Calu3 (cell line): ENCODE measurements at regions of chr1 and their contacts with region 1.

Region 1: GRCh38 chr1:201999625-202000238 is 10.7 kb upstream of the ELF3 start:
- DNase-seq: peak; percentile 65
- H3K4me3 Mint-ChIP-seq: no peak overlapping the region
- H3K27ac Mint-ChIP-seq: no peak overlapping the region
- H3K4me1 Mint-ChIP-seq: no peaks in the 10 kb centered on the region
- H3K27me3 Mint-ChIP-seq: no peaks in the 10 kb centered on the region
- CTCF ChIP-seq: peak; percentile 85

Region 2: GRCh38 chr1:201955009-201955728 is 44.6 kb before region 1 on chr1 and contains the start of gene TIMM17A:
- CTCF ChIA-PET with region 1: no interaction called
- intact Hi-C with region 1: no loop called
- DNase-seq: peak; percentile 98
- H3K4me3 Mint-ChIP-seq: peak within 1 kb of the TSS; percentile 99
- H3K27ac Mint-ChIP-seq: peak within 1 kb of the TSS; percentile 92
- H3K4me1 Mint-ChIP-seq: peaks cover 8% of the 10 kb centered on the region
- H3K27me3 Mint-ChIP-seq: no peaks in the 10 kb centered on the region
- CTCF ChIP-seq: no peak
- total RNA-seq, gene TIMM17A: 78.5 and 85.3 TPM in 2 replicates

Region 3: DNA sequence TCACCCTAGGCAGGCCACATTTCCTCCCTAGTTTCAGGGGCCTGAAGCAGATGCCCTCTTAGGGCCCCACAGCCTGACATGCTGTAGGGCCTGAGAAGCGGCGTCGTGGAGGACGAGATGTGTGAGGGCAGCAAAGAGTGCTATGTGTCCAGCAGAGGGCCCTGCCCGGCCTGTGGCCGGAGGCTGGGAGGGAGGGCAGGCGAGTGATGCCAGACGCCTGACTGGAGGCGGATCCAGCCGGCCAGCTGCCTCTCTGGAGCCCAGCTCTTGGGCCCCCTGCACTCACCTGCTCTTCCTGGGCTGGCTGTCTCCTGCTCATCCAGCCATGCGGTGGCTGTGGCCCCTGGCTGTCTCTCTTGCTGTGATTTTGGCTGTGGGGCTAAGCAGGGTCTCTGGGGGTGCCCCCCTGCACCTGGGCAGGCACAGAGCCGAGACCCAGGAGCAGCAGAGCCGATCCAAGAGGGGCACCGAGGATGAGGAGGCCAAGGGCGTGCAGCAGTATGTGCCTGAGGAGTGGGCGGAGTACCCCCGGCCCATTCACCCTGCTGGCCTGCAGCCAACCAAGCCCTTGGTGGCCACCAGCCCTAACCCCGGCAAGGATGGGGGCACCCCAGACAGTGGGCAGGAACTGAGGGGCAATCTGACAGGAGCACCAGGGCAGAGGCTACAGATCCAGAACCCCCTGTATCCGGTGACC is 123.1 kb after region 1 on chr1 and contains the start of gene GPR37L1:
- CTCF ChIA-PET with region 1: interaction called, 29 read pairs
- intact Hi-C with region 1: loop called (anchors 1 kb)
- DNase-seq: peak; percentile 79
- H3K4me3 Mint-ChIP-seq: no peak within 1 kb of the TSS
- H3K27ac Mint-ChIP-seq: peak within 1 kb of the TSS; percentile 11
- H3K4me1 Mint-ChIP-seq: peaks cover 14% of the 10 kb centered on the region
- H3K27me3 Mint-ChIP-seq: peaks cover 20% of the 10 kb centered on the region
- CTCF ChIP-seq: peak; percentile 72
- total RNA-seq, gene GPR37L1: 0.12 and 0.22 TPM in 2 replicates

Region 4: DNA sequence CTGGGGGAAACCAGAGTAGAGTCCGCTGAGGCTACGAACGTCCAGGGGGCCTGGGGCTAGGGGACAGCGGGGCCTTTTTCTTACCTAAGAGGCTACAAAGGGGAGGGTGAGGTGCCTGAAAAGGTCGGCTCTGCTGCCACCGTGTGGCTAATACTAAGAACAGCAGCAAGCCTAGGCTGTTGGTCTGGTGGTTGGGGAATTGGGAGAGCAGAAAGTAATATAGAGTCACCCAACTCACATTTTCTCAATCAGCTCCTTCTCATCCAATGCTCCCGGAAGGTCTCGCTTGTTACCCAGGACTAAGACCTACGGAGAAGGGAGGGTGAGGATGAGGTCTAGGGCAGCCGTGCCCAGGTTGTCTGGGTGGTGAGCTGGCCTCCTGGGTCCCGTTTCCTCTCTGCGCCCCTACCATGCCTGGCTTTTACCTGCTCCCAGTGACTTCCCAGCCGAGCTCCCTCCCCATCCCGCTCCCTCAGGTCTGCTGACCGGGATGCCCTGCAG is 135.5 kb after region 1 on chr1:
- CTCF ChIA-PET with region 1: interaction called, 14 read pairs
- intact Hi-C with region 1: no loop called
- DNase-seq: peak; percentile 62
- H3K4me3 Mint-ChIP-seq: no peak overlapping the region
- H3K27ac Mint-ChIP-seq: no peak overlapping the region
- H3K4me1 Mint-ChIP-seq: no peaks in the 10 kb centered on the region
- H3K27me3 Mint-ChIP-seq: no peaks in the 10 kb centered on the region
- CTCF ChIP-seq: peak; percentile 84

Region 5: GRCh38 chr1:202315576-202316168 is 315.9 kb after region 1 on chr1:
- CTCF ChIA-PET with region 1: no interaction called
- intact Hi-C with region 1: loop called (anchors 10 kb)
- DNase-seq: peak; percentile 88
- H3K4me3 Mint-ChIP-seq: no peak overlapping the region
- H3K27ac Mint-ChIP-seq: no peak overlapping the region
- H3K4me1 Mint-ChIP-seq: no peaks in the 10 kb centered on the region
- H3K27me3 Mint-ChIP-seq: peaks cover 50% of the 10 kb centered on the region
- CTCF ChIP-seq: peak; percentile 88